ENCODE measurements at regions of chr4 and their contacts with region 1.

Region 1: DNA sequence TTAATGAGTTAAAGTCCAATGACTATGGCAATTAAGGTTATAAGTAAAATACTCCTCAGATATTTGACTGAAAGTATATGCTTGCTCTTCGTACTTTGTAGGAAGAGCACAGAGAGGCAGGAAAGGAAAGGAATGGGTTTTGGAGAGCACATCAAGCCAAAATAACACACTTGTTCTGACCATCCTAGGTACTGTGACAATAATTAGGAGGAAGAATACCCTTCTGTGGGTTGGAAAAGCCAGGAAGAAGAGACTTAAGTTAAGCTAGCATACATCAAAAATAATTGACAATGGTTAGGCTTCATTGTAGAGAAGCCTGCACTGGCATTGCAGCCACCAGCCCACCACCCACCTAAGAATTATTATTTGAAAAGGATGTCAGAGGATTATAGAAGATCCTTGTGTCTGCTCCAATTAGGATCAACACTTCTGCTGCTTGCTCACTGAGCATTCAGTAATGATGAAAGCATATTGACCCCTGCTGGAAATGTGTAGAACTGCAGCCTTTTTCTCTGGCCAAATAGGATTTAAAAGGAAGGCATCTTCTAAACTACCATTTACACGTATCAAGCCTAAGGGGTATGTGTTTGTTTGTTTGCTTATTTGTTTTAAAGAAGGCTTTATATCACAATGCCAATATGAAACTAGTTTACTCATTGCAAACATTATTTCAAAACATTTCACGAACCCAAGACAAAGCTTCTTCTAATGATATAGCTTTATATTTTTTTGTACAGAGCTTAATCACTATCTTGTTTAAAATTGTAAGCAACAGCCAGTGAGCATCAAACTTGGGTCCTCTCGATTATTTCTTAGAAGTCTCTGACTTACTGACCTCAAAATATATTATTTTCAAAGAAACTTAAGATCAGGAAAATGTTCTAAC is 286.2 kb upstream of the TET2 start:
- DNase-seq: peak; percentile 33
- H3K4me3 Mint-ChIP-seq: no peak overlapping the region
- H3K27ac Mint-ChIP-seq: no peak overlapping the region
- H3K4me1 Mint-ChIP-seq: no peaks in the 10 kb centered on the region
- H3K27me3 Mint-ChIP-seq: peaks cover 14% of the 10 kb centered on the region

Region 2: GRCh38 chr4:104015680-104016253 is 844.7 kb before region 1 on chr4:
- intact Hi-C with region 1: loop called (anchors 5 kb)
- DNase-seq: no peak
- H3K4me3 Mint-ChIP-seq: no peak overlapping the region
- H3K27ac Mint-ChIP-seq: no peak overlapping the region
- H3K4me1 Mint-ChIP-seq: no peaks in the 10 kb centered on the region
- H3K27me3 Mint-ChIP-seq: no peaks in the 10 kb centered on the region

Region 3: DNA sequence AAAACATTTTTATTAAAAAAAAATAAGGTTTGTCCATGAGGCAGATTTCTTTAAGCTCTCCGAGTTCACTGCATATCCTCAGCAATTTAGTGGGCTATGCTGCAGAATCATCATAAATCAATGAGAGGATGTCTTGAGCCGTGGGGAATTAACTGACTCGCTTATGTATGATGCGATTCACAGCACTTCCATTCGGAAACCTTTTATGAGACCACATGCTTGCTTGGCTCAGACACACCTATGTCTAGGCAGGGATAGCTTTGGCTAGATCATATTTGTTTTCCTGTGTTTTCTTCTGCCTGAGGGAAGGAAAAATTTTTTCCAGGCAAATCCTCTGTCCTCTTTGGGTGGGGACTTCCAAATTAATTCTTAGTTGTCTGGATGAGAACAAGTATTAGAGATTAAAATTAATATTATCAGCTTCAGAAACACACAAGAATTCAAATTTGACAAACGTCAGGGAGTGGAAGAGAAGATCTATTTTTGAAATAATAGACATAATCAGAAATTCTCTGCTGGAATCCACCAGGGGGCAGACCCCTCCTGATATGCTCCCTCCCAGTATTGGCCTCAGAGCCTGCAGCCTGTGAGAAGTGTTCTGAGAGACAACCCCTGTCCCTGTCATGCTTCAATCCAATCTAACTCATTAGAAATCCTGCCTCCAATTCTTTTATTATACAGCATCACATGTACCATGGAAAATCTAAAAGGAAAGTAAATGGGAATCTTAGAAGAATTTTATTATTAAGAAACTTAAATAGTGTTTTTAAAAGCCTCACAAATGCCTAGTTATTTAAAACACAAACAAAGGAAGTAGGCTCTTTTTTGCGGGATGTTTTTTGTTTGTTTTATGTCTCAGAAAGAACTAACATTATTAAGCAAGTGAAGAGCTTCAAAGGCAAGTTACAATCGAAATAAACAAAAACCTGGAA is 795.6 kb before region 1 on chr4:
- intact Hi-C with region 1: loop called (anchors 1 kb)
- DNase-seq: no peak
- H3K4me3 Mint-ChIP-seq: no peak overlapping the region
- H3K27ac Mint-ChIP-seq: no peak overlapping the region
- H3K4me1 Mint-ChIP-seq: no peaks in the 10 kb centered on the region
- H3K27me3 Mint-ChIP-seq: no peaks in the 10 kb centered on the region

Region 4: DNA sequence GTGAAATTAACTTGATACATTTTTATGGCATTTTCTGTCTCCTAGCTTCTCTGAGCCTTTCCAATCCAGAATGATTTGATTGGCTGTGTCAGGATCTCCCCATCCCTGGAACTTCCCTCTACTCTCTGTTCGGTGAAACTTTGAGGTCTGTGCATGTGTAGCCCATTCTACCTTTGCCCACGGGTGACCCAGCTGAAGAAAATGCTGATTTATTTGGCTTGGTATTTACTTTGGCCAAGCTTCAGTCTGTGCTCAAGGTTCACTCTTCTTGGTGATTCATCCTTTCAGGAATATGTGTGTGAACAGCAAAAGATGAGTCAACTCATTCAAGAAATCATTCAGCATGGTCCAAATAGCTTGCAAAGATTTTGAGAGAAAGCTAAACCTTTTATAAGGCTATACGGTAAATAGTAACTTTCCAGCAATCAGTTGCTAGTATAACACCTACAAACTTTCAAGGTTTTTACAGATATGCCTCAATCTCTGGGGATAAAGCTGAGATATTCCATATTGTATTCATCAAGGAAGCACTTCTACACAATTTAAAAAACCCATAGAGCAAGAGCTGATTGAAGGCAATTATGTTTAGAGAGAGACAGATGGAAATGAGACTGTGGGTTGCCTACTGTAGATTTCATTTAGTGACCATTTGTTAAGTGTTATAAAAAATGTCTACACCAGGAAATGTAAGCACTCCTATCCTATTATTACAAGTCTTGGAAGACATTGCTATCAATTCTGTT is 131.9 kb before region 1 on chr4:
- intact Hi-C with region 1: no loop called
- DNase-seq: no peak
- H3K4me3 Mint-ChIP-seq: no peak overlapping the region
- H3K27ac Mint-ChIP-seq: no peak overlapping the region
- H3K4me1 Mint-ChIP-seq: no peaks in the 10 kb centered on the region
- H3K27me3 Mint-ChIP-seq: no peaks in the 10 kb centered on the region

Region 5: DNA sequence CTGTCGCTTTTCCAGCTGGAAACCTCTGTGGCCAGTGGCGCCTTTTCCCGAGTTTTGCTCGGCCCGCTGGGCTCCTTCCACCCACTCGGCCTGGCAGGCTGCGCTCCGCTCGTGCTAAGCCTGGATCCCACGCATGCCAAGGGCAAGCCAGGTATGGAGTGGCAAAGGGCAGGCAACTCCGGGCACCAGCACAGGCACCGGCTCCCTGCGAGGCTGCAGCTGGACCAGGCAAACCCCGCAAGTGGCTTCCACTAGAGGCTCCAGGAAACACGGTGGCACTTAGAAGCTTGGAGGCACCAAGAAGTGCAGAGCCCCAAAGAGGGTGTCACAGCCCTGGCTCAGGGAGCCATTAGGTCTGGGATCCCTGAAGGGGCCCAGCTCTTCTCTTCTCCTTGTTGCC is 553.8 kb after region 1 on chr4:
- intact Hi-C with region 1: no loop called
- DNase-seq: no peak
- H3K4me3 Mint-ChIP-seq: no peak overlapping the region
- H3K27ac Mint-ChIP-seq: no peak overlapping the region
- H3K4me1 Mint-ChIP-seq: no peaks in the 10 kb centered on the region
- H3K27me3 Mint-ChIP-seq: no peaks in the 10 kb centered on the region

Measured in activated T-helper 1 cell treated with anti-CD3 and anti-CD28 coated beads, Interleukin-12 subunit alpha, Interleukin-12 subunit beta, Interleukin-2, Interleukin-4 antibody, amounts not matched to agents 30 ng/mL and 10 ng/mL and 1 ng/mL, durations not matched to agents 14 hours and 24 hours and 36 hours (primary cell).